Natural killer cell (primary cell): ENCODE measurements at regions of chr2 and their contacts with region 1.

Region 1: DNA sequence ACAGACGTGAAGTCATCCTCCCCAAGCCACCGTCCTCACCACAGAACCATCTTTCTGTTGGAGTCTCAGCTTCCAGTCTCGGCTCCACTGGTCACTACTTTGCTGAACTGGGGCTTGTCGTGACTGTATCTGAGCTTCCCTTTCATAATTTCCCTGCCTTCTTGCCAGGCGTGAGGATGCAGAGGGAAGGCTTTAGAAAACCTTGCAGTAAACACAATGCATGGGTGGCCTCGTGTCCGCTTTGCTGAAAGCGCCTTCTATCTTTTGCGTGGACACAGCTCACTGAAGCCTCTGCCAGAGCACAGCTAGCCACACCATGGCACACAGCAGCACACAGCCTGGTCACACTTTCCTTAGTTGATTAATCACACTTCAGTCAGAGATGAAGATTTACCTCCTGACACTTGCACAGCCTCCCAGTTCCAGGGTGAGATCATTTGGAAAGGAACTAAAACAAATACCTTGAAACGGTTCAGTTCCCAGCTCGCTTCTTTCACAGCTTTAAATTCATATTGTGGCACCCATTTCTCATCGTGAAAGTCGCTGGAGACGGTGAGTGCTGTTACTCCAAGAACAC is 2.8 kb upstream of the GPR45 start:
- DNase-seq: no peak
- ATAC-seq: no peak
- H3K4me3 ChIP-seq: no peak overlapping the region
- H3K4me3 Mint-ChIP-seq: no peak overlapping the region
- H3K27ac ChIP-seq: no peak overlapping the region
- H3K27ac Mint-ChIP-seq: no peak overlapping the region
- H3K4me1 ChIP-seq: no peaks in the 10 kb centered on the region
- H3K4me1 Mint-ChIP-seq: peaks cover 6 to 11% of the 10 kb centered on the region in 2 donors
- H3K27me3 ChIP-seq: no peaks in the 10 kb centered on the region
- H3K27me3 Mint-ChIP-seq: peaks cover 3 to 29% of the 10 kb centered on the region in 2 donors
- CTCF ChIP-seq: no peak

Region 2: DNA sequence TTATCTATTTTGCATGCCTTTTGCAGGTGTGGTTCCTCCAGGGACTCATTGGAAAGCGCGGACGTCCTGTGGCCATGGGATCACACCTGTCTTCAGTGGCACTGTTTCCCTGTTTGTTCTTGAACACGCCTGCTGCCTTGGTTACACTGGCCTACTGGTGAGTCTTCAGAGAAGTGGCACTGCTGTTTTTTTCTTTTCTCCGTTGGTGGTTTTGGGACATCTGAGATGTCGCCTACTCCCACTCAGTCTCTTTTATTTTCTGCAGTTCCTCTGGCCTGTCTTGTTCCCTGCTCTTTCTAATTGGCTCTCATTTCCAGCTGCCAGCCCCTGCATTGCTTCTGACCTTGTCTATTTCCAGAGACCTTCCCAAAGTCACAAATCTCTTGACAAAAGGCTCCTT is 420.5 kb before region 1 on chr2:
- intact Hi-C with region 1: no loop called
- DNase-seq: no peak
- ATAC-seq: no peak
- H3K4me3 ChIP-seq: no peak overlapping the region
- H3K4me3 Mint-ChIP-seq: no peak overlapping the region
- H3K27ac ChIP-seq: no peak overlapping the region
- H3K27ac Mint-ChIP-seq: no peak overlapping the region
- H3K4me1 ChIP-seq: no peaks in the 10 kb centered on the region
- H3K4me1 Mint-ChIP-seq: no peaks in the 10 kb centered on the region
- H3K27me3 ChIP-seq: no peaks in the 10 kb centered on the region
- H3K27me3 Mint-ChIP-seq: peaks cover 7 to 13% of the 10 kb centered on the region in 2 donors
- CTCF ChIP-seq: no peak

Region 3: DNA sequence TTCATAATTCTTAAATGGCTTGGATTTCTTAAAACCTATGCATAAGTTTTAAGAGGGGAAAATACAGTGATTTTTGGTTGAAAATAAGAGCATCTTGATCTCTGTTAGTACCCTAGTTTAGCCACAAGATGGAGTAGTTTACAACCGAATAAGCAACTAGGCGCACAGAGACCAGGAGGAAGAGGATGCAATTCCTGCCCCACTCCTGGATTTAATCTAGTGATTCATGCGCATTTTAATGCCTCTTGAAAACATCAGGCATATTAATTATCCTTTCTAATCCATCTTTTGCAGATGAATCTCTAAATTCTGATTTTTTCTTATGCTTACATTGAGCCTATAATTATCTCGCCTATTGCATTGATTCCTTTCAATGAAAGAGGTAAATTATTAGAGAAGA is 124.2 kb before region 1 on chr2:
- intact Hi-C with region 1: loop called (anchors 1 kb)
- DNase-seq: peak in 1 of 2 donors; percentile 61
- ATAC-seq: peak in 2 of 3 donors; percentile 64 to 69
- H3K4me3 ChIP-seq: no peak overlapping the region
- H3K4me3 Mint-ChIP-seq: no peak overlapping the region
- H3K27ac ChIP-seq: no peak overlapping the region
- H3K27ac Mint-ChIP-seq: no peak overlapping the region
- H3K4me1 ChIP-seq: peaks cover 4% of the 10 kb centered on the region
- H3K4me1 Mint-ChIP-seq: peaks cover 4 to 7% of the 10 kb centered on the region in 2 donors
- H3K27me3 ChIP-seq: no peaks in the 10 kb centered on the region
- H3K27me3 Mint-ChIP-seq: no peaks in the 10 kb centered on the region
- CTCF ChIP-seq: peak; percentile 82

Region 4: DNA sequence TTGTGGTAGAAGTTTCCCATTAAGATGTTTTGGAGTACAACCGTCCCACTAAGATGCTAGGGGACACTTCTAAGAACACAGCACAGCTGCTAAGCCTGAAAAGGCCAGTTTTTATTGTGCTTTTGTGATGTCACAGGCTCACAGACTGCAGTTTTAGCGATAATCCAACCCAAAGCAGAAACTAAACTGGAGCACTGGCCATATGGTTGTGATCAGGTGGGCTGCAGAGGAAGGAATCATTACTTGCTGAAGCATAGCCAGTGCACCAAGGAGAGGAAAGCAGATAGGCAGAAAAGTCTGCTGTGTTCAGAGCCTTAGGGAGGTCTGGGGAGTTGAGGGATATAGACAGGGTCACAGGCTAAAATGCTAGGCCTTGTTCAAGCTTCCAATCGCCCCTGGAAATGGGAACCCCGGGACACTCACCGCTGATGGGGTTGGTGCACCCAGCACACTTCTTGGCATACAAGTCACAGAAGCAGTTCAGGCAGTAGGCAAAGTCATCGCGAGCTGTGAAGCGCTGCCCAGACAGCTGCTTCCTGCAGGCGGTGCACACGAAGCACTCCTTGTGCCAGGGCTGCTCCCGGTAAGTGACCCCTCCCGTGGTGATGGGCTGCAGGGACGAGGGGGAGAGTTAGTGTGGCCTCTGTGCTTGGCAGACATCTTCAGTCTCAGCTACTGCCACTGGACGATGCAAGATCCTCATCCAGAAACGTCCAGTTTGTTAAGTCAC is 124.3 kb after region 1 on chr2:
- intact Hi-C with region 1: no loop called
- DNase-seq: peak in 1 of 2 donors; percentile 12
- ATAC-seq: peak in 2 of 3 donors; percentile 5 to 39
- H3K4me3 ChIP-seq: no peak overlapping the region
- H3K4me3 Mint-ChIP-seq: no peak overlapping the region
- H3K27ac ChIP-seq: no peak overlapping the region
- H3K27ac Mint-ChIP-seq: no peak overlapping the region
- H3K4me1 ChIP-seq: peaks cover 4% of the 10 kb centered on the region
- H3K4me1 Mint-ChIP-seq: peaks cover 20 to 28% of the 10 kb centered on the region in 2 donors
- H3K27me3 ChIP-seq: no peaks in the 10 kb centered on the region
- H3K27me3 Mint-ChIP-seq: peaks cover 7 to 8% of the 10 kb centered on the region in 2 donors
- CTCF ChIP-seq: no peak

Region 5: DNA sequence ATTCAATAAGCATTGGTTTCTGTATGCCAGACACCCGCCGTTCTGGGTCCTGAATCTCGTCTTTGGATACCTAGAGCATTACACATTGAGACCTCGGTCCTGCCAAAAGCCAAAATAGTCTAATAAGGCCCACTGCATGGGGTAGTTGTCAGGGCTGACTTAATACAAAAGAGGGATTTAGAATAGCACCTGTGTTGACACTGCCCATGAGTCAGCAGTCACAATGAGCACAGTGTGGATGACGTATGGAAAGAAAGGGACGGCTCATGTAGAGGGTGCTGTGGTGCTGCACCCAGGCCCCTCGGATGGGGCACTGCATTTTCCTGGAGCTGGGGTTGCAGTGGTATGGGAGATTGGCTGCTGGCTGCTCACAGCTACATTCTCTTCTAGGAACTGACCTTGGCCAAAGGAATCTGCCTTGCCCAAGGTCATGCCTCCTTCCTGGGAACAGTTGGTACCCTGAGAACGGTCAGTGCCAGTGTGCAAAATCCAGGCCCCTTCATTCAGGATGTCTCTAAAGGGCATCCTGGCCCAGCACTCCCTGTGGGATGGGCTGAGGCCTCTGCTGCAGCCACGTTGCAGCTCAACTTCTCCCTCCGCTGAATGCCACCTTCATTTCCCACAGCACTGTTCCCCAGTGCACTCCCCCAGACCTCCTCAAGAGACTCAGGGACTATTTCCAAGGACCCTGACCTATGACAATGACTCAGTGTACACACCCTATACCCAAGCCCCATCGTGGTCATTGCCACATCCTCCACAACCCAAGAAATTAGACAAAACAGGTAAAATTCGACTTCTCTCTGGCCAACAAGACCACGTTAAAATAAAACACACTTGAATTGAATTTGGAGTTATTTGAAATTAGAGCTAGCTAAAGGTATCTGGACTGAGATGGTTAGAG is 379.3 kb after region 1 on chr2:
- intact Hi-C with region 1: no loop called
- DNase-seq: no peak
- ATAC-seq: no peak
- H3K4me3 ChIP-seq: no peak overlapping the region
- H3K4me3 Mint-ChIP-seq: no peak overlapping the region
- H3K27ac ChIP-seq: no peak overlapping the region
- H3K27ac Mint-ChIP-seq: no peak overlapping the region
- H3K4me1 ChIP-seq: no peaks in the 10 kb centered on the region
- H3K4me1 Mint-ChIP-seq: peaks cover 0 to 6% of the 10 kb centered on the region in 2 donors
- H3K27me3 ChIP-seq: no peaks in the 10 kb centered on the region
- H3K27me3 Mint-ChIP-seq: peaks cover 15% of the 10 kb centered on the region in 2 donors
- CTCF ChIP-seq: no peak